Ascending aorta (tissue), 2 donors: ENCODE measurements at regions of chr1 and their contacts with region 1.

Region 1: DNA sequence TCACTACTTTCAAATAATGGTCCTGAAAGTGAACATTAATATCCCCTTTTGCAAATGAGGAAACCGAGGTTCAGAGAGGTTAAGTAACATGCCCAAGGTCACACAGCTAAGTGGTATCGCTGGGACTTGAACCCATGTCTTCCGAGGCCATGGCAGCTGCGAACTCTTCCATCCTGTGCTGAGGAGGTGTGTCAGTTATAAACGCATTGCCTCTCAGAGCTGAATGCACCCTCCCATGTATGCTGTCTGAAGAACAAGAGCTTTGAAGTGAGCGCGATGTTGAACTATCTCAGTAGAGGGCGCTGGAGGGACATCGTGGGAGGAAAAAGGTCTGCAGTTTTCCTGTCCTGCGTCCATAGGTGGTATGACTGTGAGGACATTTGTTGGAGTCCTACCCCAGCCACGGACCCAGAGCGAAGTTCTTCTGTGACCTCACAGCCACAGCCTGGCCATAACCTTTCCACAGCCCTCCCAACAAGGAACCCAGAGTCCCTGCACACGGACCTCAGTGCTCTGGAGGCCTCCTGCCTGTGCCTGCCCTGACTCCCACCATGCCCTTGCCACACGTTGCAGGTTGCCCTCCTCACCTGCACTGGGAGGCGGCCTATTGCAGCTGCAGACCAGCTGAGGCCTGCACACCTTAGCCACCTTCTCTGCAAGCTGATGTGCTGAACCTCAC is 7.5 kb downstream of the MYOC start:
- DNase-seq: peak; percentile 39 to 92
- H3K4me3 ChIP-seq: peak overlapping the region in 1 of 2 donors; percentile 37
- H3K27ac ChIP-seq: peak overlapping the region; percentile 81 to 86
- H3K4me1 ChIP-seq: peaks cover 6 to 14% of the 10 kb centered on the region in 2 donors
- H3K27me3 ChIP-seq: no peaks in the 10 kb centered on the region
- CTCF ChIP-seq: peak; percentile 80 to 95 (median 87)

Region 2: GRCh38 chr1:171038284-171038683 is 606.7 kb before region 1 on chr1:
- intact Hi-C with region 1: no loop called
- DNase-seq: no peak
- H3K4me3 ChIP-seq: no peak overlapping the region
- H3K27ac ChIP-seq: no peak overlapping the region
- H3K4me1 ChIP-seq: no peaks in the 10 kb centered on the region
- H3K27me3 ChIP-seq: no peaks in the 10 kb centered on the region
- CTCF ChIP-seq: no peak

Region 3: DNA sequence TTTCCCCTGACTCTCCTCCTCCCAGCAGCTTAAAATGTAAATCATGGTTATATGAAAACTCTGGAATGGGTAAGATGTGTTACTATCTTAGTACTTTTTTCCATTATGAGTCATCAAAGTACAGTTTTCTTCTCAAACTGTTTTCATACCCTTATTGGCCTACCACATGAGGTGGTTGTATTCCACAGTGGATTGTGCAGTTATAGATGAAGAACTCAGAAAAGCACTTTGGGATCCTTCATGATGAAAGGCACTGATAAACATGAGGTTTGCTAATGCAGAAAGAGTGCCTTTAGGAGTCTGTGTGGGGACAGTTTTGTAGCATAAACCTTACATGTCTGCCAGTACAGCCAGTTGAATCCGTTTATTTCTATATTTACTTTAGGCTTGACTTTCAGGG is 54.9 kb before region 1 on chr1:
- intact Hi-C with region 1: no loop called
- DNase-seq: no peak
- H3K4me3 ChIP-seq: no peak overlapping the region
- H3K27ac ChIP-seq: no peak overlapping the region
- H3K4me1 ChIP-seq: no peaks in the 10 kb centered on the region
- H3K27me3 ChIP-seq: no peaks in the 10 kb centered on the region
- CTCF ChIP-seq: no peak

Region 4: GRCh38 chr1:171654942-171655745 is 10.2 kb after region 1 on chr1:
- intact Hi-C with region 1: loop called (anchors 1 kb)
- DNase-seq: peak in 1 of 2 donors; percentile 78
- H3K4me3 ChIP-seq: peak overlapping the region in 1 of 2 donors; percentile 32
- H3K27ac ChIP-seq: peak overlapping the region; percentile 87 to 96
- H3K4me1 ChIP-seq: peaks cover 8 to 36% of the 10 kb centered on the region in 2 donors
- H3K27me3 ChIP-seq: no peaks in the 10 kb centered on the region
- CTCF ChIP-seq: peak in 2 of 3 experiments; percentile 45 to 47

Region 5: GRCh38 chr1:171715813-171716251 is 70.9 kb after region 1 on chr1:
- intact Hi-C with region 1: loop called (anchors 1 kb)
- DNase-seq: no peak
- H3K4me3 ChIP-seq: no peak overlapping the region
- H3K27ac ChIP-seq: peak overlapping the region in 1 of 2 donors; percentile 49
- H3K4me1 ChIP-seq: no peaks in the 10 kb centered on the region
- H3K27me3 ChIP-seq: no peaks in the 10 kb centered on the region
- CTCF ChIP-seq: peak; percentile 34 to 64 (median 51)

Region 6: DNA sequence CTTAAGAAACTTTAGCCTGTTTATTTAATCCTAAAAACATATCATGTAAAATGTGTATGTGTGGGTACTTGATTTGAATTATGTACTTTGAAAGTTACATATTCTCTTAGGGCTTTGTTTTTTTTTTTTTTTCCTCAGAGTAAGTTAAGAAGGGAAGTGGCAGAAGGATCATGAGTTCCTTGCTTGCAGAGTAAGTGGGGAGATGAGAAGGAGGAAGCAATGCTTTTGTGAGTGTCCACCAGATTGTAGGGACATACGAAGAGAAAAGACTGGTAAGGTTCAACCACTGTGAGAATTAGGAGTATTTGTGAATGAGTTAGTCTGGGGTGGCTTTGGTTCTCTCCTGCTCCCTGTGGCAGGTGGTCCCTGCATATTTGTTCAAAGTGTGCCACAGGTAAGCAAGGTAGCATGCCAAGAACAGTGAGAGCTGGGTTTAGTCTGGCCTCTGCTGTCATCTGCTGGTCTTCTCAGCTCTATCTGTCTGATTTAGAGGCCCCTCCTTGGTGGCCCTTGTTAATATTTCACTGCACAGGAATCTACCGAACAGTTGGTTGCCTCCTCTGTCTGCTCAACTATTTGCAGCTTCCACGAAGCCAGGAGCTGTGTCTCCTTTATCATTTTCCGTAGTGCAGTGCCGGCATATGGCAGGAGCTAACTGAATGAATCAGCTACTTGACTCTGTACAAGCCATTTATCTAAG is 205.9 kb after region 1 on chr1:
- intact Hi-C with region 1: no loop called
- DNase-seq: no peak
- H3K4me3 ChIP-seq: no peak overlapping the region
- H3K27ac ChIP-seq: no peak overlapping the region
- H3K4me1 ChIP-seq: no peaks in the 10 kb centered on the region
- H3K27me3 ChIP-seq: no peaks in the 10 kb centered on the region
- CTCF ChIP-seq: no peak

Region 7: GRCh38 chr1:171984850-171985485 is 340.0 kb after region 1 on chr1:
- intact Hi-C with region 1: loop called (anchors 1 kb)
- DNase-seq: no peak
- H3K4me3 ChIP-seq: no peak overlapping the region
- H3K27ac ChIP-seq: no peak overlapping the region
- H3K4me1 ChIP-seq: no peaks in the 10 kb centered on the region
- H3K27me3 ChIP-seq: no peaks in the 10 kb centered on the region
- CTCF ChIP-seq: peak; percentile 48 to 76 (median 67)